ENCODE measurements at regions of chr5 and their contacts with region 1.

Region 1: GRCh38 chr5:132490486-132491367 is at the start of gene IRF1:
- DNase-seq: peak; percentile 99
- H3K4me3 Mint-ChIP-seq: peak within 1 kb of the TSS; percentile 95
- H3K27ac Mint-ChIP-seq: peak within 1 kb of the TSS; percentile 81
- H3K4me1 Mint-ChIP-seq: peaks cover 71% of the 10 kb centered on the region
- H3K27me3 Mint-ChIP-seq: no peaks in the 10 kb centered on the region
- total RNA-seq, gene IRF1: 155 TPM in 2 replicates

Region 2: GRCh38 chr5:132103332-132103951 is 387.3 kb before region 1 on chr5:
- intact Hi-C with region 1: loop called (anchors 10 kb)
- DNase-seq: peak; percentile 81
- H3K4me3 Mint-ChIP-seq: peak overlapping the region; percentile 47
- H3K27ac Mint-ChIP-seq: peak overlapping the region; percentile 99
- H3K4me1 Mint-ChIP-seq: peaks cover 79% of the 10 kb centered on the region
- H3K27me3 Mint-ChIP-seq: no peaks in the 10 kb centered on the region

Region 3: GRCh38 chr5:132162945-132163344 is 327.8 kb before region 1 on chr5:
- intact Hi-C with region 1: no loop called
- DNase-seq: no peak
- H3K4me3 Mint-ChIP-seq: no peak overlapping the region
- H3K27ac Mint-ChIP-seq: no peak overlapping the region
- H3K4me1 Mint-ChIP-seq: no peaks in the 10 kb centered on the region
- H3K27me3 Mint-ChIP-seq: peaks cover 7% of the 10 kb centered on the region

Region 4: DNA sequence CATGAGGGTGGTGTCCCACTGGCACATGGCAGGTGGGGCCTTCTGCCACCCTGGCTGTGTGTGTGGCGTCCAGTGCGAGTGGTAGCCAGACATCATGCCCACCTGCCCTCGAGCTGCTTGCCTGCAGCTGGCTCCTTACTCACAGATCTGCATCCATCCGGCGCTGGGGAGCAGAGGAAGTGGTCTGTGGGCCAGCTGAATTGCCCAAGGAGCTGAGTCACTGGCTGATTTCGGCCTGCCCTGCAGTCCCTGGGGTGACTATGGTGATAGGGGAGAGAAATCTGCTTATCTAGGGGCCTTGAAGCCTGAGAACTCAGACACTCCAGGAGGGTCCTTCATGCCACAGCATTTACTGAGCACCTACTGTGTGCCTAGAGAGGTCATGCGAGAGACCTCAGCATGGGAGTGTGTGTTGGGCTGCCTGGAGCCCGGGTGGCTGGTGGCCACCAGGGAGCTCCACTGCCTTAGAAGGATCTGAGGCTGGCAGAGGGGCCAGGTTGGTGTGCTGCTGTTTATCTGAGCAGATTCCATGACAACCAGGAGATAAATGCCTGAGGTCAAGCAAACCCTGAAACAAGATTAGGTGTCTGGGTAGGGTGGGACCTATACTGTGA is 64.1 kb before region 1 on chr5:
- intact Hi-C with region 1: loop called (anchors 2 kb)
- DNase-seq: peak; percentile 62
- H3K4me3 Mint-ChIP-seq: peak overlapping the region; percentile 67
- H3K27ac Mint-ChIP-seq: peak overlapping the region; percentile 96
- H3K4me1 Mint-ChIP-seq: peaks cover 94% of the 10 kb centered on the region
- H3K27me3 Mint-ChIP-seq: no peaks in the 10 kb centered on the region

Region 5: DNA sequence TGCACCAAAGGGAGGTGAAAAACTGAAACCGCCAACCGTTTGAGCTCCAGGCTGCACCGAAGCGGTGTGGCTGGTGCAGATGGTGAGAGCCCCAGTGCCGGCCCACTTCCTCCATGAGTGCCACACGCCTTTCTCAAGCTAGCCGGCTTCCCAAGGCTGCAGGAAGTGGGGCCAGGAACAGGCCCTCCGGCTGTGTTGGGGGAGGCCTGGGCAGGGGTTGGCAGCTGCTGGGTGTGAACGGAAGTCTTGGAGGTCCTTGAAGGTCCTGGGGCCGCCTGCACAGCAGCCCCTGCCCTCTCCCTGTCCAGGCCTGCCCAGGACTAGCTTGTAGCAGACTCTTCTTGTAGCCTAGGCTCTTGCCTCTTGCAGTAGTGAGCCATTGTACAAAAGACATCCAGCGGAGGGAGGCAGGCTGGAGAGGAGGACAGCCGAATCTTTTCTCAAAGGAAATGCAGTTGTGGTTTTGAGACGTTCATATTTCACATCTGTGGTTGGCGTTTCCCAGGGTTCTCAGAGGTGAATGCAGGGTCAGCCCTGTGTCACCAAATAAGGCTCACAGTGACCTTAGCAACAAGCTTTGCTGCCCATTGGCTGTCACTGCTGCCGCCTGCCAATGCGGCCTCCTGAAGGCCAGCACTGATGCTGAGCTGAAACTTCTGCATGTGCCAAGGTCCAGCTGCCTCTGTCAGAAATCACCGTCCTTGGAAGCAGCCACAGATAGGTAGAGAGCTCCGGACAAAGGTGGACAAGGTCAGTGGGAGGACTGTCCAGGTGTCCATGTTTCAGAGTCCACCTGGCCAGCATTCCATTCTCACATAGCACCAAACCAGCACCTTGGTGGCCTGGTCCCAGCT is 24.1 kb before region 1 on chr5:
- intact Hi-C with region 1: loop called (anchors 1 kb)
- DNase-seq: peak; percentile 77
- H3K4me3 Mint-ChIP-seq: peak overlapping the region; percentile 58
- H3K27ac Mint-ChIP-seq: peak overlapping the region; percentile 82
- H3K4me1 Mint-ChIP-seq: peaks cover 83% of the 10 kb centered on the region
- H3K27me3 Mint-ChIP-seq: no peaks in the 10 kb centered on the region

Region 6: DNA sequence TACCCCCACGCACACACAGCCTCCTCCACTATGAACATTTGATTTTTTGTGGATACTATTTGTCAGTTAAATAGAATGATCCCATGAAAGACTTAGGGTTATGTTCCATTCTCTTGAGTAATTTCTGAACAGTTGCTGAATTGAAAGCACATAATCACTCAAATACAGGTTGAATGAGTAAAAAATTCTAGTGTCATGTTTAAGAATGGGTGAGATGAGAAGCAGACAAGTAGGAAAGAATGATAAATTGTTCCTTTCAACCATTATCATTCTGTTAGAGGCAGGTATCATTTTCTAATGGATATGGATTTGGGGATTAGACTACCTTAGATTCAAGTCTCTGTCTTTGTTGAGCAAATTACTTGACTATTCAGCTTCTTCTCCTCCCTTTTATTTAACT is 85.4 kb after region 1 on chr5:
- intact Hi-C with region 1: no loop called
- DNase-seq: no peak
- H3K4me3 Mint-ChIP-seq: no peak overlapping the region
- H3K27ac Mint-ChIP-seq: peak overlapping the region; percentile 30
- H3K4me1 Mint-ChIP-seq: peaks cover 25% of the 10 kb centered on the region
- H3K27me3 Mint-ChIP-seq: no peaks in the 10 kb centered on the region

Region 7: GRCh38 chr5:133051580-133052332 is 561.0 kb after region 1 on chr5 and contains the start of gene HSPA4:
- intact Hi-C with region 1: loop called (anchors 10 kb)
- DNase-seq: peak; percentile 97
- H3K4me3 Mint-ChIP-seq: peak within 1 kb of the TSS; percentile 84
- H3K27ac Mint-ChIP-seq: peak within 1 kb of the TSS; percentile 99
- H3K4me1 Mint-ChIP-seq: peaks cover 30% of the 10 kb centered on the region
- H3K27me3 Mint-ChIP-seq: no peaks in the 10 kb centered on the region
- total RNA-seq, gene HSPA4: 223 and 229 TPM in 2 replicates

Measured in activated T-helper 2 cell treated with anti-CD3 and anti-CD28 coated beads, Interferon-gamma antibody, Interleukin-2, Interleukin-4, amounts not matched to agents 10 μg/mL and 5 μg/mL and 100 μg/mL, durations not matched to agents 14 hours and 24 hours and 36 hours (primary cell).